GM12878 (cell line): ENCODE measurements at regions of chr7 and their contacts with region 1.

Region 1: DNA sequence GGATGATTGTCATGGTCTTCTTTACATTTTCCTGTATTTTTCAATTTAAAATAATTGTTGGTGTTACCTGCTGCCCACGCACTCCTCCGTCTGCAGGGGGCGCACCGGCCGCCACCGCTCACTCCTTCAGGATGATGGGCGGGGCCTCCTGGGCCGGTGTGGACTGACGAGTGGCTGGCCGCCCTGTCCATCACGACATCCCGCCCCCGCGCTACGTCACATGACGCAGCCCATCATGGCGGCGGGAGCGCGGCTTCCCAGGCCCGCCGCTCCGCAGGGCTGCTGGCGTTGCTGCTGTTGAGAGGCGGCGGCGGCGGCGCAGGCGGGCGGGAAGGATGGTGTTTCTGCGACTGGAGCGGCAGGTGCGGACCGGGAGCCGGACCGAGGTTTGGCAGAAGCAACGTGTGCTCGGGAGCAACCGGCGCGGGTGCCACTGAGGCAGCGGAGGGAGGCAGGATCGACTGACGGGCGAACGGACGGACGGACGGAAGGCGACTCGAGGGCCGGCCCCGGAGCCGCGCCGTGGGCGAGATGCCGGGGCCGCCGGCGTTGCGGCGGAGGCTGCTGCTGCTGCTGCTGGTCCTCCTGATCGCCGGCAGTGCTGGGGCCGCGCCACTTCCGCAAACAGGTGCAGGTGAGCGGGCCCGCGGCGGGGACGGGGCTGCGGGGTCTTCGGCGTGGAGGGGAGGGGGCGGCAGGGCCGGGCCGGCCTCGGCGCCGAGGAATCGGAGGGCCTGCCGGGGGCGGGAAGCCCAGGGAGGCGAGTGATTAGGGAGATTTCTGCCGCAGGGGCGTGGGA is at the start of gene LMTK2:
- DNase-seq: peak; percentile 65
- ATAC-seq: peak; percentile 100
- H3K4me3 ChIP-seq: peak within 1 kb of the TSS; percentile 65
- H3K27ac ChIP-seq: no peak within 1 kb of the TSS
- H3K4me1 ChIP-seq: no peaks in the 10 kb centered on the region
- H3K27me3 ChIP-seq: no peaks in the 10 kb centered on the region
- CTCF ChIP-seq: peak; percentile 89 to 96 (median 94); a peak in 5 of 6 replicates
- EP300 ChIP-seq: no peak
- POLR2A ChIP-seq: peak; percentile 99
- RAD21 ChIP-seq: peak; percentile 76
- polyA plus RNA-seq, gene LMTK2: 0.68 to 1.1 TPM

Region 2: GRCh38 chr7:98000356-98000755 is 106.5 kb before region 1 on chr7:
- CTCF ChIA-PET with region 1: no interaction called
- POLR2A ChIA-PET with region 1: no interaction called
- RAD21 ChIA-PET with region 1: no interaction called
- SMC1A ChIA-PET with region 1: no interaction called
- in situ Hi-C with region 1: no loop called
- intact Hi-C with region 1: no loop called
- DNase-seq: no peak
- ATAC-seq: peak; percentile 55; the same call in 2 of the 3 replicates
- H3K4me3 ChIP-seq: no peak overlapping the region
- H3K27ac ChIP-seq: no peak overlapping the region
- H3K4me1 ChIP-seq: no peaks in the 10 kb centered on the region
- H3K27me3 ChIP-seq: no peaks in the 10 kb centered on the region
- CTCF ChIP-seq: no peak
- EP300 ChIP-seq: no peak
- POLR2A ChIP-seq: no peak
- RAD21 ChIP-seq: no peak

Region 3: DNA sequence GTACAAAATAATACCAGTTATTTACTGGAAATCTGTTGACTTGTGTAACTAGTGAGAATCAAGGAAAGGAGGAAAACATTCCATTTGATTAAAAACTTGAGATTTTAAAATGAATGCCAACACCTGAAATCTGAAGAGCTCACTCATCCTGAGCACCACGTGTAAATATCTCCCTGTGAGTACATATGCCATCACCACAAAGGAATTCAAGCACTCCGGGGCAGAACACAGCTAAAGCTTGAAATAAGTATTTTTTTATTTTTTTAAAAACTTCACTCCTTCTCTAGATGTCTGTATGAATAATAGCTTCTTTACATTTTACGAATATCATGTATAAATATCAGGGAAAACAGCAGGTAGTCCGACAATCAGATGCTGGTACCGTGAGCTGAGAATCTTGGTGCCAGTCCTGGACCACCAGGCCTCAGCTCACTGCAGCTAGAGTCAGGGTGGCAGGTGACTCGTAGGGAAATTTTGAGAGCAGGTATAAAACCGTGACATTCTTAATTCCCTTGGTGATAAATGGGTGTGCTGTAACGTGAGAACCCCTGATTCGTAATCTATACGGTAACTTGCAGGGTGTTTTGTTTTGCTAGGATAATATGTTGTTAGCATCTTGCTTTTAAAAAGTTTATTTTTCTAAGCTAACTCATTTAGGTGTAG is 12.5 kb after region 1 on chr7:
- CTCF ChIA-PET with region 1: interaction called, 14 read pairs
- POLR2A ChIA-PET with region 1: interaction called, 4 read pairs
- RAD21 ChIA-PET with region 1: interaction called, 4 read pairs
- SMC1A ChIA-PET with region 1: interaction called, 5 read pairs
- in situ Hi-C with region 1: no loop called
- intact Hi-C with region 1: no loop called
- DNase-seq: no peak
- ATAC-seq: no peak
- H3K4me3 ChIP-seq: no peak overlapping the region
- H3K27ac ChIP-seq: no peak overlapping the region
- H3K4me1 ChIP-seq: no peaks in the 10 kb centered on the region
- H3K27me3 ChIP-seq: no peaks in the 10 kb centered on the region
- CTCF ChIP-seq: no peak
- EP300 ChIP-seq: no peak
- POLR2A ChIP-seq: no peak
- RAD21 ChIP-seq: no peak

Region 4: GRCh38 chr7:98133181-98133580 is 26.3 kb after region 1 on chr7:
- CTCF ChIA-PET with region 1: interaction called, 31 read pairs
- POLR2A ChIA-PET with region 1: interaction called, 3 read pairs
- RAD21 ChIA-PET with region 1: interaction called, 12 read pairs
- SMC1A ChIA-PET with region 1: interaction called, 21 read pairs
- in situ Hi-C with region 1: no loop called
- intact Hi-C with region 1: loop called (anchors 2 kb)
- DNase-seq: peak; percentile 63
- ATAC-seq: peak; percentile 82
- H3K4me3 ChIP-seq: no peak overlapping the region
- H3K27ac ChIP-seq: no peak overlapping the region
- H3K4me1 ChIP-seq: peaks cover 39% of the 10 kb centered on the region
- H3K27me3 ChIP-seq: no peaks in the 10 kb centered on the region
- CTCF ChIP-seq: no peak
- EP300 ChIP-seq: peak in 1 of 2 experiments; percentile 82; a peak in 3 of 4 replicates
- POLR2A ChIP-seq: no peak
- RAD21 ChIP-seq: no peak

Region 5: DNA sequence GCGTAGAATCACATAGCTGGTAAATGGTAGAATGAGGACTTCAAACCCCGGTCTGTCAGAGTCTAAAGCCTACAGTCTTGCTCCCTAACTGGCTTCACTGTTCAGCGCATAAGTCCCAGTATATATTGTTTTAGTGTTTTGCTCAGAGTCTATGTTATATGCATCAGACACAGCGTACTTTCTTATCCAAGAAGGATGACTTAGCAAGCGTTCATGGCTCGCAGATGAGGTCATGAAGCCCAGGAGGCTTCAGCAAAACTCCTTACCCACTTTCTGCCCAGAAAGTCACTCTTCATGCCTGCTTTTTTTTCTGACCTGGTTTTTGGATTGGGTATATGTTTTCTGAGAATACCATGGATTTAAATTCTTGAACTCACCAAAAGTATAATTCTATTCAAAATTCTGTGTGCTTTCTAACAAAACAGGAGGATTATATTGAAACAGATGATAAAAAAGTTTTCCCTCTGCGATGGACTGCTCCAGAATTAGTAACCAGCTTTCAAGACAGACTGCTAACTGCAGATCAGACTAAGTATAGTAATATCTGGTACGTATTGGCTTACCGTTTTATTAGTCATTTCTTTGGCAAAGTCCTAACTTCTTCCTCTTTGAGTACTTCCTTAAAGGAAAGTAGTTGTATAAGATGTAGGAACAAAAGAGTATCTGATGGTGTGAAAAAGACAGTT is 79.7 kb after region 1 on chr7:
- CTCF ChIA-PET with region 1: no interaction called
- POLR2A ChIA-PET with region 1: no interaction called
- RAD21 ChIA-PET with region 1: no interaction called
- SMC1A ChIA-PET with region 1: no interaction called
- in situ Hi-C with region 1: no loop called
- intact Hi-C with region 1: no loop called
- DNase-seq: no peak
- ATAC-seq: no peak
- H3K4me3 ChIP-seq: no peak overlapping the region
- H3K27ac ChIP-seq: no peak overlapping the region
- H3K4me1 ChIP-seq: no peaks in the 10 kb centered on the region
- H3K27me3 ChIP-seq: no peaks in the 10 kb centered on the region
- CTCF ChIP-seq: no peak
- EP300 ChIP-seq: no peak
- POLR2A ChIP-seq: no peak
- RAD21 ChIP-seq: no peak

Region 6: DNA sequence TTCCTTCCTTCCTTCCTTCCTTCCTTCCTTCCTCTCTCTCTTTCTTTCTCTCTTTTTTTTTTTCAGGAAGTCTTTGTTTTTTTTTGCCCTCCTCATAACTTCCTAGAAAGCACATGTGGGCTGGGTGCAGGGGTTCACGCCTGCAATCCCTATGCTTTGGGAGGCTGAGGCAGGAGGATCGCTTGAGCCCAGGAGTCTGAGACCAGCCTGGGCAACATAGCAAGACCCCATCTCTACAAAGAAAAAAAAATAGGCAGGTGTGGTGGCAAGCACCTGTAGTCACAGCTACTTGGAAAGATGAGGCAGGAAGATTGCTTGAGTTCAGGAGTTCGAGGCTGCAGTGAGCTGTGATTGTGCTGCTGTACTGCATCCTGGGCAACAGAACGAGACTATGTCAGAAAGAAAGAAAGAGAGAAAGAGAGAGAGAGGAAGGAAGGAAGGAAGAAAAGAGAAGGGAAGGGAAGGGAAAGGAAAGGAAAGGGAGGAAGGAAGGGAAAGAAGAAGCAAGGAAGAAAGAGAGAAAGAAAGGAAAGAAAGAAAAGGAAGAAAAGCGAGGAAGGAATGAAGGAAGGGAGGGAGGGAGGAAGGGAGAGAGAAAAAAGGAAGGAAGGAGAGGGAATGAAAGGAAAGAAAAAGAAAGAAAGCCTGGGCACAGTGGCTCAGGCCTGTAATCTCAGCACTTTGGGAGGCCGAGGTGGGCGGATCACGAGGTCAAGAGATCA is 307.5 kb after region 1 on chr7:
- CTCF ChIA-PET with region 1: no interaction called
- POLR2A ChIA-PET with region 1: no interaction called
- RAD21 ChIA-PET with region 1: no interaction called
- SMC1A ChIA-PET with region 1: no interaction called
- in situ Hi-C with region 1: no loop called
- intact Hi-C with region 1: no loop called
- DNase-seq: no peak
- ATAC-seq: no peak
- H3K4me3 ChIP-seq: no peak overlapping the region
- H3K27ac ChIP-seq: no peak overlapping the region
- H3K4me1 ChIP-seq: peaks cover 6% of the 10 kb centered on the region; the same call in 1 of the 2 replicates
- H3K27me3 ChIP-seq: 0 out of 4 replicates have a peak, but pooled peaks cover 0 to 3% of the 10 kb centered on the region in 2 experiments
- CTCF ChIP-seq: no peak
- EP300 ChIP-seq: no peak
- POLR2A ChIP-seq: no peak
- RAD21 ChIP-seq: no peak